Colonic mucosa (tissue), 4 donors: ENCODE measurements at regions of chr14 and their contacts with region 1.

Region 1: DNA sequence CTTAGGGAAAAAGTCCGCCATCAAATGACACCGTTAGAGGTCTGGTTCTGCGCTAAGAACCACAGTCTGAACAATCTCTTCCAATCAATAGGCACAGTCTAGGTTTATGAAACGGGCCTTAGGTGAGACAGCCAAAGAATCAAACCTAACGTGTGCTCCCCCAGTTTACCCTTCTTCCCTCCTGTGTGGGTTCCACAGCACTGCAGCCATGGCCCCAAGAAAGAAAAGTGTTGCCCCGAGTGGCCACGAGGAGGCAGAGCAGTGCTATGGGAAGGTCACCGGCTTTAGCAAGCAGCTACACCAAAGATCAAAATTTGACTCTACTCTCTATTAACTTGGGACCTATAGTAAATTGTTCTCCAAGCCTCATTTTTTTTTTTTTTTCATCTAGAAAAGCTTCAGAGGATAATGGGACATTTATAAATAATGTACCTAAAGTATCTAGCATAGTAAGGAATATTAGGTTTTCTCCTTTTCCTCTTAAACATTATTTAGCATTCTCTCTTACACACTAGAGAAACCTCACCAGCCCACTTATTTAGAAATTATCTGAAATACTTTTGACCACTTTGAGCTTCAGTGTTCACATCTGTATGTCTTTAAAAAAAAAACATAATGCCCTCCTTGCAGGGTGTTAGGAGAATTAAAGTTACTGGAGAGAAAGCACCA is 70.2 kb upstream of the GPHB5 start:
- DNase-seq: peak; percentile 68
- H3K4me3 ChIP-seq: no peak overlapping the region
- H3K27ac ChIP-seq: no peak overlapping the region
- H3K4me1 ChIP-seq: no peaks in the 10 kb centered on the region
- H3K27me3 ChIP-seq: no peaks in the 10 kb centered on the region
- CTCF ChIP-seq: peak; percentile 78

Region 2: DNA sequence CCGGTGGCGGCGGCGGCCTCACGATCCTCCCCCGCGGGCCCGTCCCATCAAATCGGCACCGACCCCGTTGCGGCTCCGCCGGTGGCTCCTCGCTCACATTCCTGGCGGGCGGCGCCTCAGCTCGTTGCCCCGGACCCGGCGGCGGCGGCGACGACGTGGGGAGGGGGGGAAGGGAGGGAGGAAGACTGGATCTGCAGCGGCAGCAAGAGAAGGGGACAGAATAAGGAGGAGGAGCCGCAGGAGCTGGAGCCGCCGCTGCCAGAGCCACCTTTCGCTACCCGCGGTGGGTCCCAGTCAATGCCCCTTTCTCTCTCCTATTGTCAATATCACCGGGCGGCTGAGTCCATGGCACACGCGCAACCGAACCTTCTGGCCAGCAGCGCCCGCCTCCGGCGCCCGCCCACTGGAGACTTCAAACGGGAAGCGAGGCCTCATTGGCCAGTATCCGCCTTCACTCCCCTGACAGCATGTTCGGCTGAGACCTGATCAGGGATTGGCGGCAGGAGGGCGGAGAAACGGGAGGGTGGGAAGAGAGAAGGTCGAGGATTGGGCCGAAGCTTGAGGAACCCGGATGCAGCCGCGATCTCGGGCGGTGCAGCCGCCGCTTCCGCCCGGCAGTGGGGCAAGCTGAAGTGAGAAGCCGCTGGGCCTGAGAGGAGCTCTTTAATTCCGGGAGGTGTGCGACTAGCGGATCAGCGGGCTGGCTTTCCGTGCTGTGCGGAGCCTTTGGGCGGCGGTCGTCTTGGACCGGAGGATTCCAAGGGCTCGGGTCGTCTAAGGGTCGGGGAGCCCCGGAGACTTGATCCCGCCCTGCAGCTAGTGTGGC is 154.3 kb after region 1 on chr14 and contains the start of gene PPP2R5E:
- intact Hi-C with region 1: loop called (anchors 5 kb)
- DNase-seq: peak; percentile 98
- H3K4me3 ChIP-seq: peak within 1 kb of the TSS; percentile 95
- H3K27ac ChIP-seq: peak within 1 kb of the TSS; percentile 95
- H3K4me1 ChIP-seq: no peaks in the 10 kb centered on the region
- H3K27me3 ChIP-seq: no peaks in the 10 kb centered on the region
- CTCF ChIP-seq: no peak
- total RNA-seq, gene PPP2R5E: 58.0 to 62.7 TPM

Region 3: DNA sequence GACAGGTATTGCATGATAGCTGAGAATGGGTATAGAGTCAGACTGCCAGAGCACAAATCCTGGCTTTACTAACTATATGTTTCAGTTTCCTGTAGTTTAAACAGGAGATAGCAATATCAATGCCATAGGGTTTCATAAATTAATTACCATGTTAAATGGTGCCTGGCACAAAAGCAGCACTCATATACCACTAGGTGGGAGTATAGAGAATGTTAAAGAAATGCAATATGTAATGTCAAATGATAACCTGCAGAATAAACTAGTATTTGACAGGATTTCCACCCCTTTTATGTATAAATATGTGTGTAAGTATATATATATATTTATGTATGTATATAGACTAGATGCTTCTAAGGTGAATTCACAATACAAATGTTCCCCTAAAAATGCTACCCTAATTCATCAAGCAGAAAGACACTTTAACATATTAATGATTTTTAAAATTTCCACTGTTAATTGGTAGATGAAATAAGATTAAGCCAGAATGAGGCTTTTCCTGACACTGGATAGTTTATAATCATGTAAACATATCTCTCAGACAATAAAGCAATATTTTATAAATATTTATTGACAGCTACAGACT is 244.1 kb after region 1 on chr14:
- intact Hi-C with region 1: loop called (anchors 10 kb)
- DNase-seq: no peak
- H3K4me3 ChIP-seq: no peak overlapping the region
- H3K27ac ChIP-seq: no peak overlapping the region
- H3K4me1 ChIP-seq: no peaks in the 10 kb centered on the region
- H3K27me3 ChIP-seq: no peaks in the 10 kb centered on the region
- CTCF ChIP-seq: peak; percentile 49

Region 4: DNA sequence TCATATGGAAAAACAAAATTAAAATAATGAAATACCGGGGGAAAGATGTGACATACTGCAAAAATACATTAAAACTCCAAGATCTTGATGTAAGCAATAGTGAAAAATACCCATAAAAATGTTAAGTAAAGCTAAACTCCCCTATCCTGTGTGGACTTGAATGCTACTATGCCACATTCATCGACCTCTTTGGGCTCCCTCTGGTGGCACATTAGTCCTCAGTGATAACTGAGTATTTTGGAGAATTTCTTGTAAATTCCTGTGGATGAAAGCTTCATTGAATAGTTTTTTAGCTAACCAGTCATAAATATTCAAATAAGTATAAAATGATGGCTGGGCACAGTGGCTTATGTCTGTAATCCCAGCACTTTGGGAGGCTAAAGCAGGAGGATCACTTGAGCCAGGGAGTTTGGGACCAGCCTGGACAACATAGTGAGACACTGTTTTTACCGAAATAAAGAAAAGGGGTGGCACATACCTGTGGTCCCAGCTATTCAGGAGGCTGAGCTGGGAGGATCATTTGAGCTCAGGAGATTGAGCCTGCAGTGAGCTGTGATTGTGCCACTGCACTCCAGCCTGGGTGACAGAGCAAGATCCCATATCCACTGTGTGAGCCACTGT is 381.4 kb after region 1 on chr14:
- intact Hi-C with region 1: loop called (anchors 10 kb)
- DNase-seq: peak; percentile 55
- H3K4me3 ChIP-seq: no peak overlapping the region
- H3K27ac ChIP-seq: no peak overlapping the region
- H3K4me1 ChIP-seq: no peaks in the 10 kb centered on the region
- H3K27me3 ChIP-seq: no peaks in the 10 kb centered on the region
- CTCF ChIP-seq: peak; percentile 66